ENCODE measurements at regions of chr11 and their contacts with region 1.

Region 1: GRCh38 chr11:77213589-77214428 is 85.8 kb downstream of the MYO7A start:
- DNase-seq: no peak
- ATAC-seq: no peak
- H3K4me3 ChIP-seq: no peak overlapping the region
- H3K27ac ChIP-seq: no peak overlapping the region
- H3K4me1 ChIP-seq: no peaks in the 10 kb centered on the region
- H3K27me3 ChIP-seq: peaks cover 3% of the 10 kb centered on the region
- CTCF ChIP-seq: no peak

Region 2: GRCh38 chr11:77244243-77245027 is 30.6 kb after region 1 on chr11:
- CTCF ChIA-PET with region 1: interaction called, 13 read pairs
- POLR2A ChIA-PET with region 1: no interaction called
- in situ Hi-C with region 1: no loop called
- intact Hi-C with region 1: no loop called
- DNase-seq: peak; percentile 61
- ATAC-seq: peak; percentile 89
- H3K4me3 ChIP-seq: no peak overlapping the region
- H3K27ac ChIP-seq: no peak overlapping the region
- H3K4me1 ChIP-seq: no peaks in the 10 kb centered on the region
- H3K27me3 ChIP-seq: no peaks in the 10 kb centered on the region
- CTCF ChIP-seq: no peak

Region 3: DNA sequence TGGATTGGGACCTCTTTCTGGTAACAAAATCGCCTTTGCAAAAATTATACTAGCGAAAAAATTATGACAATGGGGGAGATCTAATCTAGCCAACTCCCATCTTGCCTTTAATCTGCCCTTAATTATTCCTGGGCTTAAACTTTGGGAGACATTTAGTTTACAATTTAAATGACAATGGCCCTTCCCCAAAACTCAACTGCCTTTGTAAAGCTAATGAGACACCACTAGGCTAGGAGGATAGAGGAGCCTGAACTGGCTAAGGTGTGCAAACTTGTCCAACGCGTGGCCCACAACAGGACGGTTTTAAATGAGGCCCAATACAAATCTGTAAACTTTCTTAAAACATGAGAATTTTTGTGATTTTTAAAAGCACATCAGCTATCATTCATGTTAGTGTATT is 539.4 kb after region 1 on chr11:
- CTCF ChIA-PET with region 1: no interaction called
- POLR2A ChIA-PET with region 1: no interaction called
- in situ Hi-C with region 1: no loop called
- intact Hi-C with region 1: no loop called
- DNase-seq: no peak
- ATAC-seq: no peak
- H3K4me3 ChIP-seq: no peak overlapping the region
- H3K27ac ChIP-seq: no peak overlapping the region
- H3K4me1 ChIP-seq: no peaks in the 10 kb centered on the region; the same call in 1 of the 2 replicates
- H3K27me3 ChIP-seq: no peaks in the 10 kb centered on the region
- CTCF ChIP-seq: no peak